Activated CD4-positive, alpha-beta T cell treated with anti-CD3 and anti-CD28 coated beads for 36 hours (primary cell): ENCODE measurements at regions of chr9 and their contacts with region 1.

Region 1: GRCh38 chr9:111386386-111386785 is 56.4 kb upstream of the OR2K2 start:
- DNase-seq: no peak
- ATAC-seq: no peak
- H3K4me3 Mint-ChIP-seq: no peak overlapping the region
- H3K27ac Mint-ChIP-seq: no peak overlapping the region
- H3K4me1 Mint-ChIP-seq: no peaks in the 10 kb centered on the region
- H3K27me3 Mint-ChIP-seq: no peaks in the 10 kb centered on the region

Region 2: DNA sequence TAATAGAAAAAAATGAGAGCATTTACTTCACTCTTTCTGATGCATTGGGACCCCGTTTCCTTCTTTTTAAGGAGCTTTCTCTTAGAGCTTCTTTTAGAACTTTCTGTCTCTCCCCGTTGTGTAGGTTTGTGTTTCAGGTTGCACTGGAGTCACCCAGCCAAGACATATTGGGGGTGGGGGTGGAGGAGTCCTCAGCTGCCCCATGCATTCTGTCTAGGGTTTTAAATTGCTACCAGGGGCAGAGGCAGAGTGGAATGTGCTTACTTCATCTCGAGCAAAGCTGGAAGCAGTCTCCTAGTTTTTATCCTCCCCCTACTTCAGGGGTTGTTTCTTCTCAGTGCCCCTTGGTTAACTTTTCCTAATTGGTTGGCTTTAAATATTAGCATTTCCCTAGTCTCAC is 65.8 kb before region 1 on chr9:
- CTCF ChIA-PET with region 1: no interaction called
- POLR2A ChIA-PET with region 1: no interaction called
- intact Hi-C with region 1: loop called in 1 of 2 experiments (anchors 10 kb)
- DNase-seq: no peak
- ATAC-seq: no peak
- H3K4me3 Mint-ChIP-seq: no peak overlapping the region
- H3K27ac Mint-ChIP-seq: no peak overlapping the region
- H3K4me1 Mint-ChIP-seq: no peaks in the 10 kb centered on the region
- H3K27me3 Mint-ChIP-seq: peaks cover 11% of the 10 kb centered on the region

Region 3: DNA sequence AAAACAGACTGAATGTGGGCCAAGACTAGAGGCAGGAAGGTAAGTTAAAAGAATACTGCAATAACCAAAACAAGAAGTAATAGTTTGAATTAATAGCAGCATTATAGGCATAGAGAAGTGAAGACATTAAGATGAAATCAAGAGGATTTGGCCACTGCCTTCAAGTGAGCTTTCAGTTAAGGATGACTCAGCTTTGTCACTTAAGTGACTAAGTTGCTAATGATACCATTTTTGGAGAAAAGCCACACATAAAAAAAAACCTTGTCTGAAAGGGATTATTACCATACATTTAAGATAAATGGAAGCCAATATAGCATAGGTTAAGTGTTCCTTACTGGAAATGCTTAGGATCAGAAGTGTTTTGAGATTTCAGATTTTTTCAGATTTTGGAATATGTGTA is 40.8 kb after region 1 on chr9:
- CTCF ChIA-PET with region 1: no interaction called
- POLR2A ChIA-PET with region 1: interaction called, 10 read pairs
- intact Hi-C with region 1: no loop called
- DNase-seq: no peak
- ATAC-seq: peak; percentile 79
- H3K4me3 Mint-ChIP-seq: peak overlapping the region; percentile 4
- H3K27ac Mint-ChIP-seq: peak overlapping the region; percentile 19
- H3K4me1 Mint-ChIP-seq: peaks cover 11% of the 10 kb centered on the region
- H3K27me3 Mint-ChIP-seq: no peaks in the 10 kb centered on the region